B cell (primary cell): ENCODE measurements at regions of chr1 and their contacts with region 1.

Region 1: DNA sequence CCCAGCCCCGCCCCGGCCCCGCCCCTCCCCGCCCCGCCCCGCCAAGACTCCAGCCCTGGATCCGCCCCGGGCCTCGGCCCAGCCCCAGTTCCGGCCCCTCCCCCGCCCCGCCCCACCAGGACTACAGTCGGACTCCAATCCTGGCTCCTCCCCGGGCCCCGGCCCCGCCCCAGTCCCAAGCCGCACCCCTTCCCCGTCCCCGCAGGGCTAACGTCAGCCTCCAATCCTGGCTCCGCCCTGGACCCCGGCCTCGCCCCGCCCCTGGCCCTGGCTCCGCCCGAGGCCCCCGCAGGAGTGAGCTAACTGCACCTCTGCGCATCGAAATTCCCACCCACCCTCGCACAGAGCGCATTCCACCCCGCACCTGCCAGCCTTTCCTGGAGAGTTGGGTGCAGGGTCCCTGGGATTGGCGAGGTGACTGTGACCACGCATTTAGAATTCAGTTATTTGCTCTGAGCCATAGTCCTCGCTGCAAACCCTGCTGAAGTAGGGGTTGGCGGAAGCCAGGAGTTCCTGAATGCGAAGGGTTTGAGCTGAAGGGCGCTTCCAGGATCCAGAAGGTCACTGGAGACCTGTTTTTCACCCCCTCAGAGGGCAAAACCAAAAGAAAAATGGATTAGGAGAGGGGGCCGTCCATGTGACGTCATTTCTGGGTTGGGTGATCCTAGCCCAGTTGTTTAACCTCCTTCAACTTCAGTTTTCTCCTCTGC is 588 bp upstream of the IGSF8 start:
- DNase-seq: peak; percentile 96
- ATAC-seq: peak; percentile 91
- H3K4me3 ChIP-seq: peak overlapping the region; percentile 63 to 79 (median 72)
- H3K4me3 Mint-ChIP-seq: peak overlapping the region; percentile 88
- H3K27ac ChIP-seq: peak overlapping the region; percentile 95 to 99
- H3K27ac Mint-ChIP-seq: peak overlapping the region; percentile 86
- H3K4me1 ChIP-seq: peaks cover 33 to 45% of the 10 kb centered on the region in 2 donors
- H3K4me1 Mint-ChIP-seq: peaks cover 47% of the 10 kb centered on the region
- H3K27me3 ChIP-seq: no peaks in the 10 kb centered on the region
- H3K27me3 Mint-ChIP-seq: no peaks in the 10 kb centered on the region
- CTCF ChIP-seq: no peak

Region 2: GRCh38 chr1:159780583-159781582 is 318.1 kb before region 1 on chr1 and contains the start of gene DUSP23:
- CTCF ChIA-PET with region 1: no interaction called
- POLR2A ChIA-PET with region 1: no interaction called
- intact Hi-C with region 1: loop called (anchors 2 kb)
- DNase-seq: peak; percentile 96
- ATAC-seq: peak; percentile 97
- H3K4me3 ChIP-seq: peak within 1 kb of the TSS; percentile 65 to 74 (median 71)
- H3K4me3 Mint-ChIP-seq: peak within 1 kb of the TSS; percentile 92
- H3K27ac ChIP-seq: peak within 1 kb of the TSS in 1 of 2 donors; percentile 53
- H3K27ac Mint-ChIP-seq: peak within 1 kb of the TSS; percentile 90
- H3K4me1 ChIP-seq: peaks cover 13 to 15% of the 10 kb centered on the region in 2 donors
- H3K4me1 Mint-ChIP-seq: peaks cover 9% of the 10 kb centered on the region
- H3K27me3 ChIP-seq: peaks cover 0 to 4% (median 0%) of the 10 kb centered on the region in 4 experiments
- H3K27me3 Mint-ChIP-seq: peaks cover 2% of the 10 kb centered on the region
- CTCF ChIP-seq: peak; percentile 78
- total RNA-seq, gene DUSP23: 9.5 and 9.6 TPM in 2 replicates

Region 3: GRCh38 chr1:160070243-160071163 is 28.5 kb before region 1 on chr1:
- CTCF ChIA-PET with region 1: interaction called, 5 read pairs
- POLR2A ChIA-PET with region 1: no interaction called
- intact Hi-C with region 1: loop called (anchors 2 kb)
- DNase-seq: peak; percentile 81
- ATAC-seq: peak; percentile 98
- H3K4me3 ChIP-seq: peak overlapping the region in 4 of 5 experiments; percentile 48 to 63 (median 60)
- H3K4me3 Mint-ChIP-seq: peak overlapping the region; percentile 90
- H3K27ac ChIP-seq: no peak overlapping the region
- H3K27ac Mint-ChIP-seq: no peak overlapping the region
- H3K4me1 ChIP-seq: peaks cover 11 to 12% of the 10 kb centered on the region in 2 donors
- H3K4me1 Mint-ChIP-seq: peaks cover 12% of the 10 kb centered on the region
- H3K27me3 ChIP-seq: peaks cover 0 to 32% (median 19%) of the 10 kb centered on the region in 4 experiments
- H3K27me3 Mint-ChIP-seq: peaks cover 56% of the 10 kb centered on the region
- CTCF ChIP-seq: no peak

Region 4: GRCh38 chr1:160219062-160219929 is 120.3 kb after region 1 on chr1:
- CTCF ChIA-PET with region 1: interaction called, 25 read pairs
- POLR2A ChIA-PET with region 1: no interaction called
- intact Hi-C with region 1: no loop called
- DNase-seq: peak; percentile 34
- ATAC-seq: no peak
- H3K4me3 ChIP-seq: no peak overlapping the region
- H3K4me3 Mint-ChIP-seq: no peak overlapping the region
- H3K27ac ChIP-seq: peak overlapping the region in 1 of 2 donors; percentile 13
- H3K27ac Mint-ChIP-seq: peak overlapping the region; percentile 57
- H3K4me1 ChIP-seq: no peaks in the 10 kb centered on the region
- H3K4me1 Mint-ChIP-seq: no peaks in the 10 kb centered on the region
- H3K27me3 ChIP-seq: no peaks in the 10 kb centered on the region
- H3K27me3 Mint-ChIP-seq: no peaks in the 10 kb centered on the region
- CTCF ChIP-seq: no peak

Region 5: DNA sequence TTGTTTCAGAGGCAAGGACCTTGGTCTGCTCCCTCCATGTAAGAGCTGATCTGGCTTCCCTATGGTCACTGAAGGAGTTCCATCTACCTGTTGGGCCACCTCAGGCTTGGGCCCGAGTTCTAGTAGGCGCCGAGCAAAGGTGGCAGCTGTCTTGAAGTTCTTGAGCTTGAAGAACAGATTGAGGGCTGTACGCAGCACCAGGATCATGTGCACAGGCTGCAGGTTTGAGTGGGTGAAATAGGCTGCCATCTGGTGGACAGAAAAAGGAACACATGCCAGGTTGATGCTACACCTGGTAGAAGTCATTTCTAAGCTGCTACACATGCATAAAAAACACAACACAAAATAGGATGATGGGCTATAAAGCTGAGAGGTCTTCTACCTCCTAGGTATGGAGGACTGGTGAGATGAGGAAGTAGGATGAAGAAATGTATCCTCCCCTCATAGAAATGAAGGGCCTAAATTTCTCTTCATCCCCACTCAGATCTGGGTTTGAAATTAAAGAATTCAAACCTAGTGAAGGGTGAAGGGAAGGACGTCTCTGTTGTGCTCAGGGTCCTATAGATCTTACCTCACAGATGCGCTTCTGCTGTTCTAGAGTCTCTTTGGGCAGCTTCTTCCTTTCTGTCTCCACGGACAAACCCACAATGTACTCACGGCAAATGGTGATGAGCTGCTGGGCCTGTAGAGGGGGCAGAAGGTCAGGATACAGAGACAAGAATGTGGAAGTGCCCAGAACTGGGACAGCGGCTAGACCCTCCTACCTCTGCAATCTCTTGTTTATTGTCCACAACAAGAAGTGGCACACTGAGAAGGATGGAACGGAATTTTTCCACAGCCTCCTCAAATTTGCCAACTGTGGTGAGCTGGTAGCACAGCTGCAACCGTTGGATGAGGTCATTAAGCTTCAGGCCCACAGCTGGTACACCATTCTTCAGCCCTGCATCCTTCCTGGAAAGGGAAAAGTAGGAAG is 192.5 kb after region 1 on chr1:
- CTCF ChIA-PET with region 1: interaction called, 131 read pairs
- POLR2A ChIA-PET with region 1: interaction called, 3 read pairs
- intact Hi-C with region 1: loop called (anchors 1 kb)
- DNase-seq: peak; percentile 84
- ATAC-seq: peak; percentile 97
- H3K4me3 ChIP-seq: no peak overlapping the region
- H3K4me3 Mint-ChIP-seq: no peak overlapping the region
- H3K27ac ChIP-seq: peak overlapping the region in 1 of 2 donors; percentile 24
- H3K27ac Mint-ChIP-seq: peak overlapping the region; percentile 8
- H3K4me1 ChIP-seq: no peaks in the 10 kb centered on the region
- H3K4me1 Mint-ChIP-seq: peaks cover 3% of the 10 kb centered on the region
- H3K27me3 ChIP-seq: no peaks in the 10 kb centered on the region
- H3K27me3 Mint-ChIP-seq: no peaks in the 10 kb centered on the region
- CTCF ChIP-seq: peak; percentile 87

Region 6: GRCh38 chr1:161399257-161399998 is 1300.4 kb after region 1 on chr1:
- CTCF ChIA-PET with region 1: no interaction called
- POLR2A ChIA-PET with region 1: no interaction called
- intact Hi-C with region 1: loop called (anchors 10 kb)
- DNase-seq: peak; percentile 97
- ATAC-seq: peak; percentile 76
- H3K4me3 ChIP-seq: peak overlapping the region; percentile 76 to 96 (median 86)
- H3K4me3 Mint-ChIP-seq: peak overlapping the region; percentile 100
- H3K27ac ChIP-seq: peak overlapping the region; percentile 97 to 100
- H3K27ac Mint-ChIP-seq: peak overlapping the region; percentile 100
- H3K4me1 ChIP-seq: peaks cover 13 to 20% of the 10 kb centered on the region in 2 donors
- H3K4me1 Mint-ChIP-seq: peaks cover 28% of the 10 kb centered on the region
- H3K27me3 ChIP-seq: no peaks in the 10 kb centered on the region
- H3K27me3 Mint-ChIP-seq: no peaks in the 10 kb centered on the region
- CTCF ChIP-seq: peak; percentile 86